Breast epithelium (tissue), 4 donors: ENCODE measurements at regions of chr5 and their contacts with region 1.

Region 1: DNA sequence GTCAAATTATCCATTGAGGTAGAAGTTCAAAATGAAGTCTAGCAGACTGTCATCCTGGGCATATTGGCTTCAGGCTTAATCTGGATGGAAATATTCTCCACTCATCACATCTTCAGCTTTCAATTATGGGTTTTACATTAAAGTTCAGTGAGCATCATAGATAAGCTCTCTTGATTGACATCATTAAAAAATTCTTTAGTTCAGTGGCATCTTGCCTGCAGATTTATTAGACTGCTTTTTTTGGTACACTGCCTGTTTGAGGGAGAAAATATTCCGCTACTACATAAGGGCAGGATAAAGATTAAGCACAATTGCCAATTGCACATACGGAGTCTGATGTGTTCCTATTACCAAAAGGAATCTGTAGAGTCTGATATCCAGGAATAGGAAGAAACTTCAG is 2353.8 kb downstream of the MAT2B start:
- DNase-seq: no peak
- H3K4me3 ChIP-seq: no peak overlapping the region
- H3K27ac ChIP-seq: no peak overlapping the region
- H3K4me1 ChIP-seq: no peaks in the 10 kb centered on the region
- H3K27me3 ChIP-seq: no peaks in the 10 kb centered on the region
- CTCF ChIP-seq: no peak
- POLR2A ChIP-seq: no peak

Region 2: GRCh38 chr5:165325221-165325620 is 534.0 kb before region 1 on chr5:
- intact Hi-C with region 1: no loop called
- DNase-seq: no peak
- H3K4me3 ChIP-seq: no peak overlapping the region
- H3K27ac ChIP-seq: no peak overlapping the region
- H3K4me1 ChIP-seq: no peaks in the 10 kb centered on the region
- H3K27me3 ChIP-seq: no peaks in the 10 kb centered on the region
- CTCF ChIP-seq: no peak
- POLR2A ChIP-seq: no peak

Region 3: GRCh38 chr5:165735388-165735787 is 123.9 kb before region 1 on chr5:
- intact Hi-C with region 1: loop called (anchors 2 kb)
- DNase-seq: no peak
- H3K4me3 ChIP-seq: no peak overlapping the region
- H3K27ac ChIP-seq: no peak overlapping the region
- H3K4me1 ChIP-seq: no peaks in the 10 kb centered on the region
- H3K27me3 ChIP-seq: no peaks in the 10 kb centered on the region
- CTCF ChIP-seq: no peak
- POLR2A ChIP-seq: no peak

Region 4: GRCh38 chr5:165795073-165795472 is 64.2 kb before region 1 on chr5:
- intact Hi-C with region 1: no loop called
- DNase-seq: no peak
- H3K4me3 ChIP-seq: no peak overlapping the region
- H3K27ac ChIP-seq: no peak overlapping the region
- H3K4me1 ChIP-seq: no peaks in the 10 kb centered on the region
- H3K27me3 ChIP-seq: no peaks in the 10 kb centered on the region
- CTCF ChIP-seq: no peak
- POLR2A ChIP-seq: no peak

Region 5: DNA sequence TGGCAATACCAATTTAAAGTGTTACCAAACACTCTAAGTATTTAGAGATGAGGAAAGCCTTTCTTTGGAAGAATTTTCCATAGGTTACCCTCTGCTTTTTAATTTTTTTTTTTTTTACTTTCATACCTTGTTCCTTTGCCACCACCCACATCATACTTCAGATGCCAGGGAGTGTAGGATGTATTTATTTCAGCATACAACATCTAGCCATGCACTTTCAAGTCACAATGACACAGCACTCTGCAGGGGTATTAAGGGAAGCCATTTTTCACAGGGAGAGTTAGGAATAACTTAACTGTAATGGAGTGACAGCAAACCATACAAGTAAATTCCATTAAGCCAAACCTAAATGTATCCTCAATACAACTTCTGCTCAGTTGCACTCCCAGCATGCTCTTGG is 43.7 kb before region 1 on chr5:
- intact Hi-C with region 1: no loop called
- DNase-seq: no peak
- H3K4me3 ChIP-seq: no peak overlapping the region
- H3K27ac ChIP-seq: no peak overlapping the region
- H3K4me1 ChIP-seq: no peaks in the 10 kb centered on the region
- H3K27me3 ChIP-seq: no peaks in the 10 kb centered on the region
- CTCF ChIP-seq: no peak
- POLR2A ChIP-seq: no peak

Region 6: GRCh38 chr5:166251786-166252185 is 392.5 kb after region 1 on chr5:
- intact Hi-C with region 1: no loop called
- DNase-seq: no peak
- H3K4me3 ChIP-seq: no peak overlapping the region
- H3K27ac ChIP-seq: no peak overlapping the region
- H3K4me1 ChIP-seq: no peaks in the 10 kb centered on the region
- H3K27me3 ChIP-seq: no peaks in the 10 kb centered on the region
- CTCF ChIP-seq: no peak
- POLR2A ChIP-seq: no peak